Activated CD4-positive, alpha-beta T cell treated with anti-CD3 and anti-CD28 coated beads, Interleukin-2, amount 10 ng/mL, durations not matched to agents 24 days and 14 days (primary cell): ENCODE measurements at regions of chr7 and their contacts with region 1.

Region 1: DNA sequence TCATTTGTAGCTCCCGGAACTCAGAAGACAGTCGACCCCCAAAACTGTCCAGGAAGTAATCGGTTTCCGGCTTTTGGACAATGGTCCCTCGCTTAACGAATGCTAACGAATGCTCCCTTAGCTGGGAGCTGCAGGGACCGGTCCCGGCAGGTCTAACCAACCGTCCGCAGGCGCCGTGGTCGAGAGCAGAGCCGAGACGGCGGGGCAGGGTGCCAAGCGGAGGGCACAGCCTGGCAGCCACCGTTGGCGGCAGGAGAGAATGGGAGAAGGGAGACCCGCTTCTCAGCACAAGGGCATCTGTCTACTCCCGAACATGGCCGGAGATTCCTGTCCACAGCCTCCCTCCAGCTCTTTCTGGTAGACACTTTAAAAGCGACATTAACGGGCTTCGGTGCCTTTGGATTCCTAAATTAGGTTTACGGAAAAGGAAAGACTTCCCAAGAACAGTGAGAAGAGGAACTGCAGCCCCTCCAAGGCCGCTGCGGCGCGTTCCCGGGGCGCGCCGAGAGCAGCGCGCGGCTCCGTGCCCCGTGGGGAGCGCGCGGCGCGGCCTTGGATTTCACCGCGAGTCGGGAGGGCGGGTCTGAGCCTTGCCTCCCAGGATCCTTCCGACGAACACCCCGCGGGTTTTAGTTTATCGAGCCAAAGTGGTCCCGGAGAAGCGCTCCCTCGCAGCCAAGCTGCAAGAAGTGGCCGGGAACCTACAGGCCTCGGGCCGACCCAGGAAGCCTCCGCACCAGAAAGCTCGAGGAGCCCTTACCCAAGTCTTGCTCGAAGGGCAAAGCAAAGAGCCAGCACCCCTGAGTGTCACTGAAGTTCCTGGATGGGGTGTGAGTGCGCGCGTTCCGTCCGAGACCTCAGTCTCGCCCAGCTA is 3.6 kb upstream of the TBX20 start:
- DNase-seq: peak; percentile 60
- H3K4me3 Mint-ChIP-seq: no peak overlapping the region
- H3K27ac Mint-ChIP-seq: peak overlapping the region; percentile 48
- H3K4me1 Mint-ChIP-seq: peaks cover 4% of the 10 kb centered on the region
- H3K27me3 Mint-ChIP-seq: peaks cover 82% of the 10 kb centered on the region

Region 2: DNA sequence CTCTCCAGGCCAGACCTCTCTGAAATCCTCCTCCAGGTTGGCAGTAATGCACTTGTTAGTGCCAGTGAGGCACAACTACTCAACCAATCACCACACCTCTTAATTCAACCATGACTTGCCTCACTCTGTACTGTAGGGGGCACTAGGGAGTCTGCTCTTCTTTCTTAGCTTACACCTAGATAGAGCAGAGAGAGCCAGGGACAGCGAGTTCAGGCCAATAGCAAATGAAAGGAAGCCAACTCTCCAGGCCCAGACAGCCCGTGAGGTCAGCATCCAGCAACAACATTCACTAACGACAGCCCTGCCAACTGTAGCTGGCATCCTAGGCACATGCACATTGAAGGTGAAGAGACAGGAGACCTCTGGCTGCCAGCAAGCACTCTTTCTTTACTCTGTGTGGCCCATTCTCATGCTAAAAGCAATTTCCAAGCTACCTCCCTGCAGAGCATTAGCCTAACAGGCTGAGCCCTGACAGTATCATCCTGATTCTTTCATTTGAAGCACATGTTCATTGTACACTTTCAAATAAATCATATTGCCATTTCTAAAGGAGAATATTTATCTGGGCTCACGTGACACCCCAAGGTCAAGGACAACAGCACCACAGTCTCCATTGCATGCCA is 356.5 kb before region 1 on chr7:
- intact Hi-C with region 1: no loop called
- DNase-seq: no peak
- H3K4me3 Mint-ChIP-seq: no peak overlapping the region
- H3K27ac Mint-ChIP-seq: no peak overlapping the region
- H3K4me1 Mint-ChIP-seq: peaks cover 1% of the 10 kb centered on the region
- H3K27me3 Mint-ChIP-seq: peaks cover 10% of the 10 kb centered on the region

Region 3: GRCh38 chr7:35185907-35186731 is 71.4 kb before region 1 on chr7:
- intact Hi-C with region 1: loop called (anchors 5 kb)
- DNase-seq: peak; percentile 58
- H3K4me3 Mint-ChIP-seq: peak overlapping the region; percentile 73
- H3K27ac Mint-ChIP-seq: no peak overlapping the region
- H3K4me1 Mint-ChIP-seq: peaks cover 7% of the 10 kb centered on the region
- H3K27me3 Mint-ChIP-seq: peaks cover 37% of the 10 kb centered on the region